WTC11 (cell line): ENCODE measurements at regions of chr7 and their contacts with region 1.

Region 1: DNA sequence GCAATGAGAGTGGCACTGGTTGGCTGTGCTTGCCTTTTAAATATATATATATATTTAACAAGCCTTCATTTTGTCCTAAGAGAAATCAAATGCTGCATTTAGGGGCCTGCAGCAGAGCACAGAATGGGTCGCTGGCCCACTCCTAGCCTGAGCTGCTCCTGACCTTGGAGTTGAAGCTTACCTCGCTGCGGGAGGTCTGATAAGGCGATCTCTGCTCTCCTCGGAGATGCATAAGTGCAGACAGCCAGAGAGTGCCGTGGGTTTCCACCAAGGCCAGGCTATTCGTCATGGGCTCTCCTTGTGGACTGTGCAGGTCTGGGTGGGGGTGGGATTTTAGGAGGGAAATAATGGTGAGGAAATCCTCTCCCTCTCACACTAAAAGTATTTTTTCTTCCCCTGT is 99.5 kb upstream of the IKZF1 start:
- DNase-seq: peak; percentile 24
- ATAC-seq: peak; percentile 58
- H3K4me3 Mint-ChIP-seq: no peak overlapping the region
- H3K27ac Mint-ChIP-seq: no peak overlapping the region
- H3K4me1 Mint-ChIP-seq: peaks cover 12% of the 10 kb centered on the region
- H3K27me3 Mint-ChIP-seq: no peaks in the 10 kb centered on the region; the same call in 1 of the 2 replicates
- CTCF ChIP-seq: no peak

Region 2: GRCh38 chr7:50068961-50069551 is 136.0 kb before region 1 on chr7:
- CTCF ChIA-PET with region 1: no interaction called
- POLR2A ChIA-PET with region 1: no interaction called
- DNase-seq: no peak
- ATAC-seq: peak; percentile 80
- H3K4me3 Mint-ChIP-seq: peak overlapping the region; percentile 57
- H3K27ac Mint-ChIP-seq: peak overlapping the region; percentile 86
- H3K4me1 Mint-ChIP-seq: peaks cover 21% of the 10 kb centered on the region
- H3K27me3 Mint-ChIP-seq: no peaks in the 10 kb centered on the region; the same call in 1 of the 2 replicates
- CTCF ChIP-seq: no peak

Region 3: DNA sequence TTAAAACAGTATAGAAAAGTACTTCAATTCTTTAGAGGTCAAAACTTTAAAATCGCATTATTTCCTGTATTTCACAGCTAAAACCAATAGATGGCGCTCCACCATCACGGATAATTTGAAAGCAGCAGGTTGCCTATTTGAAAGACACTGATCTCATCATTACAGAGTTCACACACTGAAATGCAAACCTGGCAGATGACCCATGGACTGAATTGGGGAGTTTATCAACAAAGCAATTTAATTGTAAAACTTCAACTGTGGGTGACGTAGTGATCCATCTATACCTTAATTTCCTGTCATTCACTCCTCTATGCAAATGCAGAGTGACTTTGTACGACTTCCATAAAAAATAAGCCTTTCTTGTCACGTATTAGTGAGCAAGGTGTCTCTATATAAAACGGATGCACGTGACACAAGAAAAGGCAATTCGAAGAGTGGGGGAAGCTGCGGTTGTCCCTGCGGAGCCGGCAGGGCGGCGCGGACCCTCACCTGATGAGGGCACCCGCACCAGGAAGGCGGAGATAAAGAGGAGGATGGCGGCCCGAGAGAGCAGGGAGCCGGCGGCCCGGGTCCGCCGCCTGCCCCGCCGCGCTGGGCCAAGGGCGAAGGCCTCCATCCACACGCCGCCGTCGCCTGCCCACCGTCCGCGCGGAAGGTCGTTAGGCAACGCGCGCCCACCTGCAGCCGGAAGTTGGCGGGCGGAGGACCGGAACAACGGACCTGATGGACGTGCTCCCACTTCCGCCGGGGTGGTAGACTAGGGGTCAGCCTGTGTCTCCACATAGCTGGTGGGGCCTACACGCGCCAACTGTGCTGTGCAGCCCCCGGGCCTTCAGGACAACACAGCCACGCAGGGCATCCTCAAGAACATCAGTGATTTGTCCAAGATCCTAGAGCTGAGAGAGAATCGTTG is 112.2 kb before region 1 on chr7 and contains the start of gene ZPBP:
- CTCF ChIA-PET with region 1: interaction called, 13 read pairs
- POLR2A ChIA-PET with region 1: no interaction called
- DNase-seq: peak; percentile 41
- ATAC-seq: peak; percentile 82
- H3K4me3 Mint-ChIP-seq: peak within 1 kb of the TSS; percentile 77
- H3K27ac Mint-ChIP-seq: peak within 1 kb of the TSS; percentile 33; the same call in 1 of the 2 replicates
- H3K4me1 Mint-ChIP-seq: peaks cover 3% of the 10 kb centered on the region
- H3K27me3 Mint-ChIP-seq: peaks cover 15% of the 10 kb centered on the region
- CTCF ChIP-seq: peak; percentile 77
- total RNA-seq, gene ZPBP: not detected in 3 replicates

Region 4: DNA sequence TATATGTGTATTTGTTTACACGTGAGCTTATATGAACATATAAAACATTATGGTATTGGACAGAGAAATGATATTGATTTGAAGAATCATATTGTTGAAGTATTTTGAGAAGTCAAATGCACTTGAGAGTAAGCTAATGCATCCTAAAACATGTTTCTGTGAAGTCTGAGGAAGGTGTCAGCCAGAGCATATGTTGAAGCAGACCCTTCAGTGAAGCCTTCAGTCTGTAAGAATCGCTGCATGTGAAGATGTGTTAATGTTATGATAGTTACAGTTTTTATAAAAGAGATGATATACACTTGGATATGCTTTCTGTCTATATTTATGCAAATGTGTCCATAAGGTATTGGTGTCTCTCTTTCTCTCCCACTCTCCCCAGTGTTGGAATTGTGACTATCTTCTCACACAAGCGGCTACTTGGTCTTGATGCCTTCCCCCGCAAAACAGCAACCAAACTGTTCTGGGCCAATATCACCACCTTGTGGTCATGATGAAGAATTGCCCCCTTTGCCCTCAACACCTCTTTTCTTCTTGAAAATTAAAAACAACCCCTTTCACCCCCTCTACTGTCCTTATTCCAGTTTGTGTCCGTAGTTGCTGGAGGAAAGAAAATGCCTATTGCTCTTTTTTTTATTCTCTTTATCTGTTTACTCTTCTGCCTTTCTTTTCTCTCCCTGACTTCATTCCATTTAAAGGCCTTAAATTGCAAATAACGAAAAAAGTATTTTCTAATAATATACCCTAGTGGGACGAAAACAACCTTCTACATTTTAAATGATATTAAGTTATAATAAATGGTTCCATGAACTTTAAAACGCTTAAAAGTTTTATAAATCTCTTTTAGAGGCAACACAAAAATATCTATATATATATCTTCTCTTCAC is 164.4 kb after region 1 on chr7:
- CTCF ChIA-PET with region 1: interaction called, 26 read pairs
- POLR2A ChIA-PET with region 1: no interaction called
- DNase-seq: no peak
- ATAC-seq: peak; percentile 86
- H3K4me3 Mint-ChIP-seq: no peak overlapping the region
- H3K27ac Mint-ChIP-seq: no peak overlapping the region
- H3K4me1 Mint-ChIP-seq: no peaks in the 10 kb centered on the region
- H3K27me3 Mint-ChIP-seq: no peaks in the 10 kb centered on the region
- CTCF ChIP-seq: peak; percentile 71